Upper lobe of right lung (tissue), 1 donor: ENCODE measurements at regions of chr3 and their contacts with region 1.

Region 1: GRCh38 chr3:195909644-195910508 is 1.5 kb upstream of the TNK2 start:
- DNase-seq: peak; percentile 93
- ATAC-seq: peak; percentile 83
- H3K4me3 ChIP-seq: peak overlapping the region; percentile 53
- H3K27ac ChIP-seq: peak overlapping the region; percentile 63
- H3K4me1 ChIP-seq: peaks cover 49% of the 10 kb centered on the region
- H3K27me3 ChIP-seq: no peaks in the 10 kb centered on the region
- CTCF ChIP-seq: no peak

Region 2: DNA sequence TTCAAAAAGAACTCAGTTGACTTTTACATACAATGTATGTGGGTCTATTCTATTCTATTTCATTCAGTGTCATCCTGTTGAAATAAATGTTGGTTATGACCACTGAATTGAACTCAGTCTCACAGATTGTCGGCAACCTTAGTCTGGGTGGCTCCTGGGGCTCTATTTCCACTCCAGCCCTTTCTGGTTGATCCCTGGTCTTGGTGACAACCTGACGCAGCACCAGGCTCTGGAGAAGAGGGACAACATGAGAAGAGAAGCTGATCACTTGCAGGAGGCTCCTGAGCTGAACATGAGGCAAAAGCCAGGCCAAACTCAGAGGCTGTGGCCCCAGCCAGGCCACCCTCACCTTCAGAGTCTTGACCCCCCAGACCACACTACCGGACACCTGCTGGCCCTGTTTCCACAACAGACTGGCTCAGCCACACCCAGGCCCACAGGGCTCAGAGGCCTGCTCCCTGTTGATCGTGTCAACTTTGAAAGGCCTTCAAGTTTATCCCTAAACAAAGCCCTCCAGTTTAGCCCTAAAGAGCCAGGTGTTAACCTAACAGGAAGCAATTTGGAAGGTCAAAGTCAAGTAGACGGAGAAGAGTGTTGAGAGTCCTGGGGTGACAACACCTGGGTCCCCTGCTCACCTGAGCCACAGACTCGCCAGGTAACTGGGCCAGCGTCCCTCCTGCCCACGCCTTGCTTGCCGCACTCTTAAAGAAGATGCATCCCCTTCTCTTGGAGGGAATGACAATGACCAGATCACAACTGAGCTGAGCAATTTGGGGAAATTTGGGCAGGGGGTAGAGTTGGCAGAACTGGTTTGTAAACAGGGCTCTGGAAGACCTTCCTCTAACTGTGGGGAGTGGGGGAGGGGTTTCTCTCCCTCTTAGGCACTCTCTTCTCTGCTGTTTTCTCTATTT is 204.5 kb before region 1 on chr3:
- intact Hi-C with region 1: no loop called
- DNase-seq: no peak
- ATAC-seq: peak; percentile 36
- H3K4me3 ChIP-seq: no peak overlapping the region
- H3K27ac ChIP-seq: no peak overlapping the region
- H3K4me1 ChIP-seq: no peaks in the 10 kb centered on the region
- H3K27me3 ChIP-seq: no peaks in the 10 kb centered on the region
- CTCF ChIP-seq: no peak

Region 3: GRCh38 chr3:195863121-195864006 is 46.5 kb before region 1 on chr3:
- intact Hi-C with region 1: loop called (anchors 10 kb)
- DNase-seq: peak; percentile 94
- ATAC-seq: peak; percentile 97
- H3K4me3 ChIP-seq: no peak overlapping the region
- H3K27ac ChIP-seq: peak overlapping the region; percentile 32
- H3K4me1 ChIP-seq: no peaks in the 10 kb centered on the region
- H3K27me3 ChIP-seq: no peaks in the 10 kb centered on the region
- CTCF ChIP-seq: peak; percentile 93

Region 4: GRCh38 chr3:196486263-196486662 is 576.4 kb after region 1 on chr3:
- intact Hi-C with region 1: no loop called
- DNase-seq: no peak
- ATAC-seq: no peak
- H3K4me3 ChIP-seq: no peak overlapping the region
- H3K27ac ChIP-seq: no peak overlapping the region
- H3K4me1 ChIP-seq: no peaks in the 10 kb centered on the region
- H3K27me3 ChIP-seq: no peaks in the 10 kb centered on the region
- CTCF ChIP-seq: peak; percentile 32

Region 5: GRCh38 chr3:196665962-196666867 is 756.3 kb after region 1 on chr3:
- intact Hi-C with region 1: no loop called
- DNase-seq: no peak
- ATAC-seq: no peak
- H3K4me3 ChIP-seq: no peak overlapping the region
- H3K27ac ChIP-seq: no peak overlapping the region
- H3K4me1 ChIP-seq: peaks cover 9% of the 10 kb centered on the region
- H3K27me3 ChIP-seq: no peaks in the 10 kb centered on the region
- CTCF ChIP-seq: no peak